ENCODE measurements at regions of chr2 and their contacts with region 1.

Region 1: DNA sequence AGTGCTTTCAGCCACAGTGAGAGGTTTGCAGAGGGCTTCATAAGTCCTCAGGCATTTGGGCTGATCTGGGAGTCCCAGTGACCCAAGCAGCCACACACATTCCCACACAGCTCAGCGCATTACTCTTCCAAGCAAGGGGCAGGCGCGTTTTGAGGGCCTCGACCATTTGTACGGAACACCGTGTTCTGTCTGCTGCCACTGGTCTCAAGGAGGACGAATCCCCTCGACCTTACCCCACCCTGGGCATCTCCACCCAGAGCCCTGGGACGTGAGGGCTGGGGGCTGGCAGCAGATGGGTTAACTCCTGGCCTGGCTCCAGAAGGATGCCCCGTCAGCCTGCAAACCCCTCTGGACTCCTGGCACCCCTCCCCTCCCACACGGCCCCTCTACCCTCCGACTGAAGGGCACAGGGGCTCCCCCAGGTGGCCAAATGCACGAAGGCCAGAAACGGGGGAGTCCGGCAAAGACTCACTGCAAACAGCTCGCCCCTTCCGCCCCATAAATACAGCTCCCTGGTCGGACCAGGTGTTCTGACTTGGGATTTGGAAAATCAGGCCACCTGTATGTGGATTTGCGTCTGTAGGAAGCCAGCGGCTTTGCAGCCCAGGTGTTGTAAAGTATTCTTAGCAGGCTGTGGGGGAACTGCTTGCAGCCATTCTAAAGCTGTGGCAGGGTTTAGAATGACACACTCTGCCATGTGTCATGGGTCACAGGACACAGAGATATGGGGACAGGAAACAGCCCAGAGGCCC is 33.6 kb upstream of the PTMA start:
- DNase-seq: peak; percentile 48 to 66
- H3K4me3 ChIP-seq: no peak overlapping the region
- H3K27ac ChIP-seq: peak overlapping the region; percentile 34; the same call in 1 of the 2 replicates
- H3K4me1 ChIP-seq: peaks cover 49% of the 10 kb centered on the region
- H3K27me3 ChIP-seq: no peaks in the 10 kb centered on the region
- CTCF ChIP-seq: peak; percentile 86

Region 2: DNA sequence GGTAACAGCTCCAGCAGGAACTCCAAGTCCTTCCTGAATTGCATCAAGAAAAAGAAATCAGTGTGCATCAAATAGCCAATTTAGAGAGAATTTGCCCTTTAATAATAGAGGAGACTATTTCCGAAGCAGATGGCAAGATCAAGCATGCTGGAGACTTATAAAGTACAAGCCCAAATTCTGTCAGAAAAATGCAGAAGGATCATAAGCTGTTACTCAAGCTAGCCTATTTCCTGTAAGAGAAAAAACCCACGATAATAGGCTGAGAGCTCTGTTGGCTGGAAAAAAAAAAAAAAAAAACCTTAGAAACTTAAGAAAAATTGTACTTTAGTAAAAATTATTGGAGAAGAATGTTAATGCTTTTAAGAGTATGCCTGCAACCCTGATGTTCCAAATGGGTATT is 834.5 kb before region 1 on chr2:
- CTCF ChIA-PET with region 1: interaction called, 14 read pairs
- POLR2A ChIA-PET with region 1: no interaction called
- intact Hi-C with region 1: no loop called
- DNase-seq: no peak
- H3K4me3 ChIP-seq: no peak overlapping the region
- H3K27ac ChIP-seq: no peak overlapping the region
- H3K4me1 ChIP-seq: no peaks in the 10 kb centered on the region
- H3K27me3 ChIP-seq: peaks cover 20% of the 10 kb centered on the region
- CTCF ChIP-seq: no peak

Region 3: GRCh38 chr2:231449503-231450054 is 225.2 kb before region 1 on chr2:
- CTCF ChIA-PET with region 1: no interaction called
- POLR2A ChIA-PET with region 1: no interaction called
- intact Hi-C with region 1: no loop called
- DNase-seq: no peak
- H3K4me3 ChIP-seq: no peak overlapping the region
- H3K27ac ChIP-seq: no peak overlapping the region
- H3K4me1 ChIP-seq: no peaks in the 10 kb centered on the region
- H3K27me3 ChIP-seq: no peaks in the 10 kb centered on the region
- CTCF ChIP-seq: no peak

Region 4: GRCh38 chr2:231463698-231464575 is 210.8 kb before region 1 on chr2 and contains the start of gene NCL:
- CTCF ChIA-PET with region 1: interaction called, 11 read pairs
- POLR2A ChIA-PET with region 1: interaction called, 5 read pairs
- intact Hi-C with region 1: no loop called
- DNase-seq: peak; percentile 79 to 87
- H3K4me3 ChIP-seq: peak within 1 kb of the TSS; percentile 99
- H3K27ac ChIP-seq: peak within 1 kb of the TSS; percentile 99
- H3K4me1 ChIP-seq: peaks cover 24% of the 10 kb centered on the region
- H3K27me3 ChIP-seq: no peaks in the 10 kb centered on the region
- CTCF ChIP-seq: no peak
- total RNA-seq, gene NCL: 450 and 557 TPM in 2 replicates

Region 5: DNA sequence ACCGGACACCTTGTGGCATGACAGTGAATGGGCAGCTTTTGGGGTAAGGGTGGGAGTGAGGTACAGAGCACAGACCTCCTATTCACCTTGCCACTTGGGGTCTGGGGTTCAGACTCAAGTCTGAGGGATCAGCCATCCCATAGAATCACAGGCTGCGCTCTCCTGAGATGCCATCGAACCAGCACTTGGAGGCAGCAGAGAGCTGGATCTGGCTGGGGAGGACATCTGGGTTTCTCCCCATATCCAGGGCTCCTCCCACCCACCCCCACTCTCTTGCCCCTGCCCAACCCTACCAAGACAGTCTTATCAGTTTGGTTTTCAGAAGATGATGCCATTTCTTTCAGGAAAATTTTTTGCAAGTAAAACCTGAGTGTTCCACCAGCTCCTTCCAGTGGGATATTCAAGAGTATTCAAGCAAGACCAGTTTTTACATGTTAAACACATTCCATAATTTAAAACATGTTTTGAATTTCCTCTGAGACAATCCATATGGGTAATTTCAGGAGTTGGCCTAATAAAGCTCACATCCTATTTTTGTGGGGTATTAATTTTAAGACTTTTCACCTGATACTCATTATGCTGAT is 111.3 kb before region 1 on chr2:
- CTCF ChIA-PET with region 1: interaction called, 4 read pairs
- POLR2A ChIA-PET with region 1: interaction called, 6 read pairs
- intact Hi-C with region 1: loop called (anchors 1 kb)
- DNase-seq: peak in 1 of 2 experiments; percentile 61
- H3K4me3 ChIP-seq: no peak overlapping the region
- H3K27ac ChIP-seq: no peak overlapping the region
- H3K4me1 ChIP-seq: no peaks in the 10 kb centered on the region
- H3K27me3 ChIP-seq: no peaks in the 10 kb centered on the region
- CTCF ChIP-seq: peak; percentile 62

Region 6: DNA sequence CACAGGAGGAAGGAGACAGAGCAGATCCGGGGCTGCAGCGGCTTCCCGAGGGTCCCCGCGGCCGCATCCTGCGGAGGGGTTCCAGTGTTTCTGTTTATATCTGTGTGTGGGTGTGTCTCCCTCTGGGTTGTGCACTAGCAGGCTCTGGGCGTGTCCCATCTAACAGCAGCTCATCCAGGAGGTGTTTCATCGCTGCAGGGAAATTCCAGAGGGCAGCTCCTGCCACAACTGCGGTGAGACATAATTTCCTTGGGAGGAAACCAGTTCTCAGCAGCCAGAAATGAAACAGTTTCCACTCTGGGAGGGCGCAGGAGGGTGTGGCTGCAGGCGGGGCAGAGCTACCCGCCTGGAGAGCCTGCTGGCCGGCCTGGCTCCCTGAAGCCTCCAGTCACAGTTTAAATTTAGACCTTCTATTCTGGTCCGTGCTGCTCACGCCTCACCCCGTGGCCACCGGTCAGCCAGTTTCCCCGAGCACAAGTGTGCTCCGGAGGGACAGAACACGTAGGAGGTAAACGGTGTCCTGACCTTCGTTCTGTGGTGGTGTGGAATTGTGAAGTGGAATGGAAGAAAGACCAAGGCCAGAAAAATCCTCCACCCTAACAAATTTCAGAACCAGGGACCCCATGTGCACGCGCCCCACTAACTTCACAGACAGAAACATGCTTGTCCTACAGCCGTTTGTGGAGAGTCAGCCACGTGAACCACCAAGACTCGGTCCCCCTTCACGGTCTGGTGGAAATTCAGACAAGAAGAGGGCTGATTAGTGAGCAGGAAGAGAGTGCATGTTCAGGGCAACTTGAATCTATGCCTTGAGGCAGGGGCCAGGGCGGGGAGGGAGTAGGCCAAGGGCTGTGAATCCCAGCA is 31.9 kb before region 1 on chr2:
- CTCF ChIA-PET with region 1: interaction called, 15 read pairs
- POLR2A ChIA-PET with region 1: interaction called, 21 read pairs
- intact Hi-C with region 1: loop called (anchors 1 kb)
- DNase-seq: peak; percentile 95 to 98
- H3K4me3 ChIP-seq: peak overlapping the region; percentile 48; the same call in 1 of the 2 replicates
- H3K27ac ChIP-seq: peak overlapping the region; percentile 98
- H3K4me1 ChIP-seq: peaks cover 64% of the 10 kb centered on the region
- H3K27me3 ChIP-seq: no peaks in the 10 kb centered on the region
- CTCF ChIP-seq: no peak

Region 7: DNA sequence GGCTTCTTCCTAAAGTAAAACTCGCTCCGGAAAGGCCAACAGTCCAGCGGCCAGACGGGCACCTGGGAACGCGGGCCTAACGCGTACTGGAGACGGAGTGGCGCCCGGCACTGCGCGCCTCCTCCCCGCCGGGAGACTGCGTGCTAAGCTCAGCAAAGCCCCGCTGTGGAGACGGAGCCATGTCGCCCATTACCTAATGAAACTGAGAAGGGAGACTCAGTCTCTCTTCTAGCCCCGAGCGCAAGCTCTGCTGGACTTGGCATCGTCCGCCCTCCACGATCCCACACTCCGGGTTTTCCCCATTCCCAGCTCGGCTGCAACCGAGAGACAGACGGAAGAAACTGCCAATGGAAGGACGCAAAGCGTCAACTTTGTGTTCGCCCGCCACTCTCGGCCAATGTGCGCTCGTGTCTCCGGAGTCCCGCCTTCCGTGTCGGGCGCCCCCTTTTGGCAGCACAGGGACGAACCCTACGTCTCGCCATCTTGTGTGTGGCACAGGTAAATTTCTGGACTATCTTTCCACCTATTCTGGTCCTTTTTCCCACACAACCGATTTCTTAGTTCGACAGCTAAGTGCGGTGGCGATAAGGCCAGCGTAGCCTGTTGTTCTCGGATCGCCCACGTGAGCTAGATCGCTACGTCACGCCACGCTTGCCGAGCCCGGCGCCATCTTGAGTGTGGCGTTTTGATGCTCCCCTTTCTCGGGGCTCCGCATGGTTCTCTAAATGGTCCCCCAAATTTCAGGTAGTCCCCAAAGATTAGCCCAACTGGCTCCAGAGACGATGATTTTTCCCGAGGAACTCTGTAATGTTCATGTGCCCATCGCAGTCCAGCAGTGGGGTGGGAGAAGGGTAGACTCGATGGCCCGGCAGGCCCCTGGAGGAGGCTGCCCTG is 32.2 kb after region 1 on chr2:
- CTCF ChIA-PET with region 1: interaction called, 5 read pairs
- POLR2A ChIA-PET with region 1: interaction called, 6 read pairs
- intact Hi-C with region 1: loop called (anchors 1 kb)
- DNase-seq: peak; percentile 92 to 97
- H3K4me3 ChIP-seq: peak overlapping the region; percentile 68
- H3K27ac ChIP-seq: peak overlapping the region; percentile 99
- H3K4me1 ChIP-seq: peaks cover 21% of the 10 kb centered on the region
- H3K27me3 ChIP-seq: no peaks in the 10 kb centered on the region
- CTCF ChIP-seq: peak; percentile 83

Region 8: DNA sequence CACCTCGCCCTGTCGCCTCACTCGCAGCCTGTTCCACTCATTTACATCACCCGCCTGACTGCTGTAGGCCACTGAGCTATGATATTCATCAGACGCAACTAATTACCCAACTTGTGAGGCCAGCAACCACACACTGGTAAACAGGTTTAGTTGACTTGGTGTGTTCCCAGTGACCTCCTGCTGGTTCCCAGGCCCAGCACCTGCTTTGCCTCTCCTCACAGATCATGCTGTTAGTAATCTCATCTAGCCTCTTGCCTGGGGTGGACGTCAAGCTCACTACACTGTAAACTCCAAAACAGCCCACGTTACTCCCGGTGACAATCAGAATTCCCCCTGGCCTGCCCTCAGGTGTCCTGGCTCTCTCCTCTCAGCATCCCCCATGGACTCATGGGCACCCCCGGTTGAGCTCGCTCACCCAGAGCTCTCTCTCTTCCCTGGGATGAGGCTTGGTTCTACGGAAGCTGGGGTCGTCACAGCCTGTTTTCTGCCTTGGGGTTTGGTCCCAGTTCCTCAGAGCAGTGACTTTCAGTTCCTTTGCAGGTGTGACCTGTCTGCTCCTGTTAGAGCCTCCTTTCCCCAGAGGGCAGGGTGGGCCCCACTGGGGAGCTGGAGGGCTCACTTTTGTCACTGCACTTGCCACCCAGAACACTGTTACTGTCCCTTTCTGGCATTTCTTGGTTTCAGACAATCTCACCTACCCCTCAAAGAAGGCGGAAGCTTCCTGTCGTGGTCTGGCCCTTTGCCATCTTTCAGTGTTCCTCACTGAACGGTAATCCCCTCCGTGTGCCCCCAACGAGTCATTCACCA is 1425.6 kb after region 1 on chr2:
- CTCF ChIA-PET with region 1: no interaction called
- POLR2A ChIA-PET with region 1: no interaction called
- intact Hi-C with region 1: no loop called
- DNase-seq: no peak
- H3K4me3 ChIP-seq: no peak overlapping the region
- H3K27ac ChIP-seq: no peak overlapping the region
- H3K4me1 ChIP-seq: no peaks in the 10 kb centered on the region
- H3K27me3 ChIP-seq: no peaks in the 10 kb centered on the region
- CTCF ChIP-seq: no peak

Measured in PC-9 (cell line).